A549 (cell line): ENCODE measurements at regions of chr7 and their contacts with region 1.

Region 1: GRCh38 chr7:39580149-39580874 is 14.1 kb downstream of the YAE1 start:
- DNase-seq: peak; percentile 80 to 94
- ATAC-seq: peak; percentile 97 to 98
- H3K4me3 ChIP-seq: no peak overlapping the region
- H3K27ac ChIP-seq: peak overlapping the region in 1 of 2 experiments; percentile 28; a peak in 1 of 6 replicates
- H3K4me1 ChIP-seq: no peaks in the 10 kb centered on the region
- CTCF ChIP-seq: peak; percentile 89
- EP300 ChIP-seq: no peak
- POLR2A ChIP-seq: no peak
- RAD21 ChIP-seq: peak; percentile 95

Region 2: GRCh38 chr7:39566023-39566921 is 14.0 kb before region 1 on chr7 and contains the start of gene YAE1:
- CTCF ChIA-PET with region 1: interaction called, 26 read pairs
- POLR2A ChIA-PET with region 1: no interaction called
- DNase-seq: peak; percentile 83 to 87
- ATAC-seq: peak; percentile 99 to 100
- H3K4me3 ChIP-seq: peak within 1 kb of the TSS; percentile 74
- H3K27ac ChIP-seq: peak within 1 kb of the TSS; percentile 81 to 90
- H3K4me1 ChIP-seq: peaks cover 10% of the 10 kb centered on the region; the same call in 2 of the 3 replicates
- CTCF ChIP-seq: no peak
- EP300 ChIP-seq: no peak
- POLR2A ChIP-seq: peak; percentile 92
- RAD21 ChIP-seq: no peak
- polyA plus RNA-seq, gene YAE1: 41.7 and 59.1 TPM in 2 replicates

Region 3: DNA sequence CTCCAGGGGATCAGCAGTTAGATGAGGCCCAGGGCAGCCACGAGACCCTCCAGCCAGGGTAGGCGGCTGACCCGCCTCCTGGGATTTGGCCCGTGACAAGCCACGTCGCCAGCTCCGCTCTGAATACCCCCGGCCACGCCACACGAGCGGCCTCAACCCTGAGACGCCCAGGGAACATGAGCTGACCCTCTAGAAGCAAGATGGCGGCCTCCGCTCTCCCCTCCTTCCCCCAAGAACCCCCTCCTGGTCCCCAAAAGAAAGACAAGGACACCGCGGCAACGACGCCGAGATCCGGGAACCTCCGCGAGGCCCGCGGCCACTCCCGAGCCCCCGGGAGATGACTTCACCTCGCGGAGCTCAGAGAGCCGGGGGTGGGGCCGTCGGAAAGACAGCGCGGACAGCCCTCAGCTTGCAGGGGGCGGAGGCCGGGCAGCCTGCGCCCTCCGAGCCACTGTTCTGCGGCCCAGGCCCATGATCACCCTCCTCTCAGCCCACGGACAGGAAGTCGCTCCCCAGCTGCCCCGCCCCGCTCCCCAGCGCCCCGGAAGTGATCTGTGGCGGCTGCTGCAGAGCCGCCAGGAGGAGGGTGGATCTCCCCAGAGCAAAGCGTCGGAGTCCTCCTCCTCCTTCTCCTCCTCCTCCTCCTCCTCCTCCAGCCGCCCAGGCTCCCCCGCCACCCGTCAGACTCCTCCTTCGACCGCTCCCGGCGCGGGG is 42.9 kb after region 1 on chr7 and contains the start of gene RALA:
- CTCF ChIA-PET with region 1: interaction called, 32 read pairs
- POLR2A ChIA-PET with region 1: interaction called, 17 read pairs
- DNase-seq: peak; percentile 91 to 93
- ATAC-seq: peak; percentile 99
- H3K4me3 ChIP-seq: peak within 1 kb of the TSS; percentile 77
- H3K27ac ChIP-seq: peak within 1 kb of the TSS; percentile 80 to 99
- H3K4me1 ChIP-seq: peaks cover 33% of the 10 kb centered on the region
- CTCF ChIP-seq: no peak
- EP300 ChIP-seq: no peak; a peak in 1 of 5 replicates
- POLR2A ChIP-seq: peak; percentile 66; the same call in 1 of the 2 replicates
- RAD21 ChIP-seq: no peak
- polyA plus RNA-seq, gene RALA: 19.0 and 30.1 TPM in 2 replicates

Region 4: DNA sequence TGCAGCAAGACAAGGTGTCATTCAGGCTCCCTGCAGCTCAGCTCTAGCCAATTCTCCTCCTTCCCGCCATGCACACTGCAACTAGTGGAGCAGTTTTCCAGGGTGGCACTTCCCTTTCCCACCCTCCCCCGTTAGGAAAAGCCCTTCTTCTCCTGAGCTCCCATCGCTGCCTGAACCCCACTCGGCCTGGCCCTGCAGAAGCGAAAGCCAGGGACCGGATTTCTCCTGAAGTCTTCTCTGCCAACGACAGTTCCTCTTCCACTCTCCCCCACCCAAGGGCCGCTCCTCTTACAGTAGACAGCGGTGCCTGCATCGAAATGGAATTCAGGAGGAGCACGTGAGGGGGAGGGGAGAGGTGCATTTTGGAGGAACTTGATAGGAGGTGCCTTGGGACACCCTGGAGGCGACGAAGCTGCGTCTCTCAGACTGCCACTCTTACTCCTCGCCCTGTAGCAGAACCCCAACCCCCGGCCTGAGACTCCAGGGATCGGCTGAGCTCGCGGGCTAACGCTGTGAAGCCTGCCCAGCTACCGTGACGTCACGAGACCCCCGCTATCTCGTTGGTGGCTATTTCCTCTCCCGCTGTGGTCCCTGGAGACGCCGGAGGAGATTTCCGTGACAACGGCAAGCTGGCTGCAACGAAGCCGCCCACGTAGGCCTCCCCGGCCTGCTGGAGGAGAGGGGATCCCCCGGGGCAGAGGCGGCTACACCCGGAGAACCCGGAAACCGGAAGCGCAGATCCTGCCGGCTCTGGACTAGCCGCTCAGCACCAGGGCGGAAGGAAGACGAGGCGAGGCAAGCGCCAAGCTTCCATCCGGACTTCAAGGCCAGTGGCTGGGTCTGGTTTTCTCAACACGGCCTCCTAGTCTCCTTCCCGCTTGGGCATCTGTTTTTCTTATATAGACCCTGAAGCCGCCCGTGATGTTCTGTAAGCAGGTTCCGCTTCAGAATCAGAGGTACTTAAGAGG is 152.8 kb after region 1 on chr7:
- CTCF ChIA-PET with region 1: interaction called, 17 read pairs
- POLR2A ChIA-PET with region 1: interaction called, 5 read pairs
- DNase-seq: peak; percentile 90 to 91
- ATAC-seq: peak; percentile 97 to 98
- H3K4me3 ChIP-seq: peak overlapping the region; percentile 57
- H3K27ac ChIP-seq: peak overlapping the region; percentile 73 to 84
- H3K4me1 ChIP-seq: peaks cover 15% of the 10 kb centered on the region
- CTCF ChIP-seq: no peak
- EP300 ChIP-seq: no peak
- POLR2A ChIP-seq: peak; percentile 66
- RAD21 ChIP-seq: no peak

Region 5: GRCh38 chr7:39894904-39895303 is 314.6 kb after region 1 on chr7:
- CTCF ChIA-PET with region 1: interaction called, 13 read pairs
- POLR2A ChIA-PET with region 1: no interaction called
- DNase-seq: no peak
- ATAC-seq: peak in 1 of 2 experiments; percentile 33; a peak in 2 of 6 replicates
- H3K4me3 ChIP-seq: no peak overlapping the region
- H3K27ac ChIP-seq: no peak overlapping the region
- H3K4me1 ChIP-seq: peaks cover 3% of the 10 kb centered on the region; the same call in 1 of the 3 replicates
- CTCF ChIP-seq: no peak
- EP300 ChIP-seq: no peak
- POLR2A ChIP-seq: no peak
- RAD21 ChIP-seq: no peak